ENCODE measurements at regions of chr2 and their contacts with region 1.

Region 1: GRCh38 chr2:30711646-30712085 is 95.6 kb downstream of the CAPN13 start:
- DNase-seq: peak; percentile 89 to 90
- ATAC-seq: peak; percentile 89
- H3K4me3 ChIP-seq: no peak overlapping the region
- H3K27ac ChIP-seq: no peak overlapping the region
- H3K4me1 ChIP-seq: no peaks in the 10 kb centered on the region
- H3K27me3 ChIP-seq: no peaks in the 10 kb centered on the region

Region 2: DNA sequence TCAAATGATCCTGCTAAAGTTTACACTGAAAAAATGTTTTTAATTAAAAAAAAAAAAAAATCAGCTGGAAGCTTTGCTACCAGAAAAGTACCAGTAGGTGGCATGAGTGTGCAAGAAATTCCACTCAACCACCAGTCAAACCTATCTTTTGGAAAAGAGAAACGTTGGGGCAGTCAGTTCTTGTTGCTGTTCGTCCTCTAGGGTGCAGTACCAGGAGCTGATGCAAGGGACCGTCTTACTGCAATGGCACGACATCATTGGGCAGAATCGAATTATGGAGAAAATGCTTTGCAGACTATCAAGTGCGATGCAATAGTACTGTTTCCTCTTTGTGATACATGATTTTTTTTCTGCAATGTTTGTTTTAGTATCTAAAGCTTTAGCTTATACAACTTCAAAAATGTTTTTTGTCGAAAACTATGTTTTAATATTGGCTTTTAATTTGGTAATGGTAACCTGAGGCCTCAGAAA is 546.6 kb before region 1 on chr2:
- intact Hi-C with region 1: loop called (anchors 2 to 5 kb)
- DNase-seq: no peak
- ATAC-seq: peak; percentile 88
- H3K4me3 ChIP-seq: no peak overlapping the region
- H3K27ac ChIP-seq: no peak overlapping the region
- H3K4me1 ChIP-seq: no peaks in the 10 kb centered on the region
- H3K27me3 ChIP-seq: no peaks in the 10 kb centered on the region

Region 3: DNA sequence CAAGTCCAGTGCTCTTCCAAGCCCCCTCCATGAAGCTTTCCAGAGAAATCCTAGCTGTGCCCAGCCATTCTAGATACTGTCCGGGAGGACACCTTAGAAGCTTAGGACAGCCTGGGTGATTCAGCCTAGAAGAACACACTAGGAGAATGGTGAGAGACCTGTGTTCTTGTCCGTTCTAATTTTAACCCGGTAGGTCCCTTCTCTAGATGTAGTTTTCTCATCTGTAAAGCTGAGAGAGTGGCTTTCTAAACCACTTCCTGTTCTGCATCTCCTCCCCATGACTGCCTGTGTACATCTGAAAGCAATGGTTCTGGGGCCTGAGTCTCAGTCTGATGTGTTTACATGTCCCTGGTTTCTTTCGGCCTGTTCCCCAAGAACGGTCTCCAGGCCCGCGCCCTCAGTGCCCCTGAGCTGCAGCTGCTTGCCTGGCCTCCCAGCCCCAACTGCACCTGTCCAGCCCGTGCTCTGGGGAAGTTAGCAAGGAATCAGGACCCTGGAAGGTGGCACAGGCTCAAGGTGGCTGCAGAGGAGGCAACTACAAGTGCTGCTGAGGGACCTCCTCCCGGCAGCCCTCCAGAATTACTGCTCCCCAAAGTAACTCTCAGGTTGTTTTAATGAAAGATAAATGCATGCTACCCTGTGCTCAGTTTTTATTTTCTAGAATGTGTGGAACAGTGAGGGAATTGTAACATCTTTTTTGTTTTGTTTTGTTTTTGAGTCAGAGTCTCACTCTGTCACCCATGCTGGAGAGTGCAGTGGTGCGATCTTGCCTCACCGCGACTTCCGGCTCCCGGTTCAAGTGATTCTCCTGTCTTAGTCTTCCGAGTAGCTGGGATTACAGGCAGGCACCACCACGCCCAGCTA is 374.5 kb before region 1 on chr2:
- intact Hi-C with region 1: loop called in 1 of 2 experiments (anchors 10 kb)
- DNase-seq: no peak
- ATAC-seq: no peak
- H3K4me3 ChIP-seq: no peak overlapping the region
- H3K27ac ChIP-seq: no peak overlapping the region
- H3K4me1 ChIP-seq: no peaks in the 10 kb centered on the region
- H3K27me3 ChIP-seq: no peaks in the 10 kb centered on the region

Region 4: GRCh38 chr2:30622452-30622851 is 89.2 kb before region 1 on chr2:
- intact Hi-C with region 1: no loop called
- DNase-seq: no peak
- ATAC-seq: no peak
- H3K4me3 ChIP-seq: no peak overlapping the region
- H3K27ac ChIP-seq: no peak overlapping the region
- H3K4me1 ChIP-seq: no peaks in the 10 kb centered on the region
- H3K27me3 ChIP-seq: no peaks in the 10 kb centered on the region

Region 5: GRCh38 chr2:31170071-31170698 is 458.5 kb after region 1 on chr2:
- intact Hi-C with region 1: loop called (anchors 1 to 2 kb)
- DNase-seq: peak; percentile 61 to 81
- ATAC-seq: peak; percentile 83
- H3K4me3 ChIP-seq: no peak overlapping the region
- H3K27ac ChIP-seq: no peak overlapping the region
- H3K4me1 ChIP-seq: peaks cover 0 to 2% of the 10 kb centered on the region in 2 donors
- H3K27me3 ChIP-seq: no peaks in the 10 kb centered on the region

Region 6: DNA sequence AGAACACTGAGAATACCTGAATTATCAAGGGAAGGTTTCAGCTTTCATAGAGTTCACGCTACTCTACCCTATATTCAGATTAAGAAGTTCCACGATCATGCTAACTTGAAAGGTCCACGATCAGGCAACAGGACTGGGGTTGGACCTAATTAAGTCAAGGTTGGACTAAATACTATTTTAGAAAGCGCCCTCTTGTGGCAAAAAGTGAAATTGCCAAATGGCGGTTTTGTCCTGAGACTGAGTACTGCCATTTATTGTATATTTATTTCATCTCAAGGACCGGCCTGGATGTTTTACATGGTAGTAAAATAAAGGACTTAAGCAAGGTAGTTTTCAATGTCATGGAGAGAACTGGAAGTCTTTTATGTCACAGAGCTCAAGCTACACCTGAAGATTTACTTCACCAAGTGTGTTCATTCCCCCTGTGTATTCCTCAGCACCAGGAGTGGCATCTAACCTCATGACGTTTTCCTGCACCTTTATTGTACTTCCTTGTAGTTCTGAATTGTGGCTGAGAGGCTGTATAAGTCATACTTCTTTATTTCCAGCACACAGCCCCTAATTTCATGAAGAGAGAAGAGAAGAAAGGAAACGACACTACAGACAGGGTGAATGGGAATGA is 812.3 kb after region 1 on chr2:
- intact Hi-C with region 1: loop called (anchors 5 to 10 kb)
- DNase-seq: peak in 1 of 2 donors; percentile 48
- ATAC-seq: no peak
- H3K4me3 ChIP-seq: no peak overlapping the region
- H3K27ac ChIP-seq: no peak overlapping the region
- H3K4me1 ChIP-seq: no peaks in the 10 kb centered on the region
- H3K27me3 ChIP-seq: no peaks in the 10 kb centered on the region